Heart right ventricle (tissue), 16 donors: ENCODE measurements at regions of chr10 and their contacts with region 1.

Region 1: GRCh38 chr10:126904819-126905686 is at the start of gene DOCK1:
- DNase-seq: peak; percentile 73 to 75
- ATAC-seq: peak; percentile 65 to 88 (median 79)
- H3K4me3 ChIP-seq: peak within 1 kb of the TSS; percentile 61 to 93 (median 76)
- H3K27ac ChIP-seq: peak within 1 kb of the TSS; percentile 74 to 93 (median 88)
- H3K4me1 ChIP-seq: peaks cover 9 to 56% (median 28%) of the 10 kb centered on the region in 9 donors
- H3K27me3 ChIP-seq: peaks cover 0 to 30% (median 0%) of the 10 kb centered on the region in 7 donors
- CTCF ChIP-seq: no peak
- total RNA-seq, gene DOCK1: 18.0 to 26.7 (median 21.0) TPM

Region 2: DNA sequence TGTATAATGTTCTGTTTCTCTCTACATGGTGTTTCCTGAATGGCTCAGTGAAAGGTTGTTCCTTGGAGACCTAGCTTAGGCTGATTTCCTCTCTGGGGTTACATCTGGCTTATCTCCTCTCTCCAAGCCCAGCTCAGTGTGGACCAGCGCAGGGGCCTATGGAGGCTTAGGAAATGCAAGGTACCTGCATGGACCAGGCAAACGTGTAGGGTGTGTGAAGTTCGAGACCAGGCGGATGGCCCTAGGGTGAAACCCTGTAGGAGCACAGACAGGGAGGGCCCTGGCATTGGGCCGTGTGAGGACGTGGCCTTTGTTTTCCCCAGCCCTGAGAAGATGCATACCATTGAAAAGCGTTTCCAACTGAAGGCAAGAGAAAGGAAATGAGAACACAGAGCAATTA is 59.1 kb after region 1 on chr10:
- intact Hi-C with region 1: loop called in 1 of 10 experiments (anchors 5 kb)
- DNase-seq: no peak
- ATAC-seq: peak in 5 of 8 donors; percentile 20 to 61 (median 52)
- H3K4me3 ChIP-seq: no peak overlapping the region
- H3K27ac ChIP-seq: peak overlapping the region in 2 of 10 donors; percentile 15 to 31
- H3K4me1 ChIP-seq: peaks cover 0 to 36% (median 0%) of the 10 kb centered on the region in 9 donors
- H3K27me3 ChIP-seq: no peaks in the 10 kb centered on the region
- CTCF ChIP-seq: no peak

Region 3: DNA sequence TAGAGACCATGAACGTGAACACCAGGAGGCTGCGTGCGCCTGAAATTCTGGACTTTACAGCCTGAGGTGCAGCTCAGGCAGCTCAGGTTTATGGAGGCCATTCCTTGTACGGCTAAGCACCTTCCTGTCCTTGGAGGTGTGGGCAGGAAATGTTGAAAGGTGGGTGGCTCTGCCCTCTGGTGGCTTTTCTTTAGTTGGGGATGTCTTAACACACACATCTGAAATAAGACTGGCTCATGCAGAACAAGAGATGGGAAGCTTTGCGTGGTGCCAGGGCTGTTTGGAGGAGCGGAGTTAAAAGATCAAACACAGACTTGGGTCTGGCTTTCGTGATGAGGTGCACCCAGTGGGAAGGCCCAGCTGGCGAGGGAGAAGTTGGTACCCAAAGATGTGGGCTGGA is 64.3 kb after region 1 on chr10:
- intact Hi-C with region 1: loop called in 2 of 10 experiments (anchors 5 to 10 kb)
- DNase-seq: no peak
- ATAC-seq: peak in 1 of 8 donors; percentile 37
- H3K4me3 ChIP-seq: no peak overlapping the region
- H3K27ac ChIP-seq: no peak overlapping the region
- H3K4me1 ChIP-seq: peaks cover 0 to 46% (median 9%) of the 10 kb centered on the region in 9 donors
- H3K27me3 ChIP-seq: no peaks in the 10 kb centered on the region
- CTCF ChIP-seq: peak in 4 of 9 donors; percentile 23 to 39 (median 34)

Region 4: GRCh38 chr10:127012769-127013152 is 107.7 kb after region 1 on chr10:
- intact Hi-C with region 1: loop called in 1 of 10 experiments (anchors 10 kb)
- DNase-seq: peak; percentile 78 to 83
- ATAC-seq: peak; percentile 87 to 98 (median 96)
- H3K4me3 ChIP-seq: peak overlapping the region in 3 of 10 donors; percentile 17 to 32 (median 20)
- H3K27ac ChIP-seq: peak overlapping the region in 9 of 10 donors; percentile 39 to 74 (median 65)
- H3K4me1 ChIP-seq: peaks cover 0 to 23% (median 11%) of the 10 kb centered on the region in 9 donors
- H3K27me3 ChIP-seq: no peaks in the 10 kb centered on the region
- CTCF ChIP-seq: no peak